Caco-2 (cell line): ENCODE measurements at regions of chrX and their contacts with region 1.

Region 1: DNA sequence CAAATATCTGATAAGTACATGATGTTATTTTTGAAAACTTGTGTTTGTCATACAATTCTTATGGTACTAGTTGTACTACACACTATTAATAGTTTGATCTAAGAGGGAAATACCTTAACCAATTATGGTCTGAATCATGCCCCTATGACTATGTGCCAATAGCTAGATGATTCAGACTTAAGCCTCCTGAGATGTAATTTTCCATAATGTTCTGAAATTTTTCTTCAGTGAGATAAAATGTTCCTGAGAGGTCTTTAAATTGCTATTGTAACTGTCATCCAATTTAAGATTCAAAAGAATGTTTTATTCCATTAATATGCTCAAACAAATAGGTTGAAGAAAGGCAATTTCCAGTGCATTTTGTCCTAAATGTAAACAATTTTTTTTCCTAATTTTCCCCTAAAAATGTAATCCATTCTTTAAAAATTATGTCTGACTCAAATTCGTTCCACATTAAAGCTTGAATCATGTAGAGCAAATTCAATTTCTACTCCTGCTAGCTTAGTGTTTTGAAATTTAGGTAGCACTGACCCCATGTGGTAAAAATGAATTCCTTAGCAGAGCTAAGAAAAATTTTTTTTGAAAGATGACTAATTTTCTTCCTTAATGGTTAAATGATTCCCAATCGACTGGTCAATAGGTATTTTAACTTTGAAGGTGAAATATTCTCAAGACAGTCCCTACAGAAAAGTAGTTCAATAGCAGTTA is 49.1 kb downstream of the APOOL start:
- DNase-seq: no peak
- H3K4me3 ChIP-seq: no peak overlapping the region
- H3K4me3 Mint-ChIP-seq: no peak overlapping the region
- H3K27ac Mint-ChIP-seq: no peak overlapping the region
- H3K4me1 ChIP-seq: no peaks in the 10 kb centered on the region
- H3K4me1 Mint-ChIP-seq: no peaks in the 10 kb centered on the region
- H3K27me3 ChIP-seq: no peaks in the 10 kb centered on the region
- H3K27me3 Mint-ChIP-seq: no peaks in the 10 kb centered on the region
- CTCF ChIP-seq: peak in 1 of 2 experiments; percentile 1

Region 2: DNA sequence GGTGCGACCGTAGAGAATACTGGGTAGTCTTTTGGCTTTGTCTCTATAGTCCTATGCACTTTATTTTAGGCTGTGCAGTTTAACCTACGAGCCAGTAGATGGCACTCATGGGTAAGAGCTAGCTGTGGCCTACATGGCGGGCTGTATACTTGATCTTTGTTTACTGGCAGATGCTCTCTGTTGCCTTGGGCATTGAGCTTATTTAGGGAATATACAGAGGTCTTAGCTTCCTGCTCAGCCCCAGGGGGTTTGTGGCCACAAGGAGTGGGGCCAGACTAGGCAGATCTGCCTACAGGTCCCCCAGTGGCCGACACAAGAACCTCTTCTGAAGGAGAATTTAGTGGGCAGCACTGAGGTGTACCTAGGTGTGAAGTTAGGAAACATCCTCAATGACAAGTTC is 323.0 kb before region 1 on chrX:
- CTCF ChIA-PET with region 1: interaction called, 9 read pairs
- POLR2A ChIA-PET with region 1: no interaction called
- intact Hi-C with region 1: loop called (anchors 1 kb)
- DNase-seq: peak; percentile 29 to 36
- H3K4me3 ChIP-seq: no peak overlapping the region
- H3K4me3 Mint-ChIP-seq: no peak overlapping the region
- H3K27ac Mint-ChIP-seq: no peak overlapping the region
- H3K4me1 ChIP-seq: peaks cover 5% of the 10 kb centered on the region
- H3K4me1 Mint-ChIP-seq: peaks cover 5% of the 10 kb centered on the region
- H3K27me3 ChIP-seq: no peaks in the 10 kb centered on the region
- H3K27me3 Mint-ChIP-seq: no peaks in the 10 kb centered on the region
- CTCF ChIP-seq: peak; percentile 47 to 66

Region 3: DNA sequence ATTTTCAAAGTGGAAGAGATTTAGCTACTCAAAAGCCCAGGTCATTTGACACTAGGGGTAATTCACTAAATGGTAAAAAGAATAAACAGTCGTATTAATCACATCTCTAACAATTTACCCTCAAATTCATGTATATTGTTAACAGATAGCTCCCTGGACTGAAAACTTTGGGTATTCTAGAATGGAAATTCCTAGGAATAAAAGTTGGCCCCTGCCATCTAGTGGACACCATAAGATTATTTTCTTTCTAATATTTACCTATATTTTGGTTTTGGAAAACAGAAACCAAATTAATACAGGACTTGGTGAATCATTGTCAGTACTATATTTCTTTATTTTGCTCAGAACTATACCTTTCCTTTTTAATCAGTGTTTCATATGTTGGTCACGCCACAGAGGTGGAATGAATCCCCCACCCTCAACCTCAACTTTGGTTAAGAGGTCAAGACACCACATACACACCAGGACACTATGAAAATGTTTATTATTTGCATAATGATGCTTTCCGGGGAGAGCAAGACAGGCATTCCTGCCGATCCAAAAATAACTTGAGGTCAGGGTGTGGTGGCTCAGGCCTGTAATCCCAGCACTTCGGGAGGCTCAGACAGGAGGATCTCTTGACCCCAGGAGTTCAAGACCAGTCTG is 145.3 kb before region 1 on chrX:
- CTCF ChIA-PET with region 1: interaction called, 7 read pairs
- POLR2A ChIA-PET with region 1: no interaction called
- intact Hi-C with region 1: loop called (anchors 5 kb)
- DNase-seq: peak in 1 of 2 experiments; percentile 2
- H3K4me3 ChIP-seq: no peak overlapping the region
- H3K4me3 Mint-ChIP-seq: no peak overlapping the region
- H3K27ac Mint-ChIP-seq: no peak overlapping the region
- H3K4me1 ChIP-seq: no peaks in the 10 kb centered on the region
- H3K4me1 Mint-ChIP-seq: no peaks in the 10 kb centered on the region
- H3K27me3 ChIP-seq: no peaks in the 10 kb centered on the region
- H3K27me3 Mint-ChIP-seq: no peaks in the 10 kb centered on the region
- CTCF ChIP-seq: no peak

Region 4: GRCh38 chrX:85003655-85004244 is 49.0 kb before region 1 on chrX and contains the start of gene APOOL:
- CTCF ChIA-PET with region 1: interaction called, 8 read pairs
- POLR2A ChIA-PET with region 1: no interaction called
- intact Hi-C with region 1: loop called (anchors 5 kb)
- DNase-seq: peak; percentile 88 to 90
- H3K4me3 ChIP-seq: peak within 1 kb of the TSS; percentile 63
- H3K4me3 Mint-ChIP-seq: peak within 1 kb of the TSS; percentile 84
- H3K27ac Mint-ChIP-seq: peak within 1 kb of the TSS; percentile 88
- H3K4me1 ChIP-seq: no peaks in the 10 kb centered on the region
- H3K4me1 Mint-ChIP-seq: no peaks in the 10 kb centered on the region
- H3K27me3 ChIP-seq: no peaks in the 10 kb centered on the region
- H3K27me3 Mint-ChIP-seq: no peaks in the 10 kb centered on the region
- CTCF ChIP-seq: no peak
- total RNA-seq, gene APOOL: 20.0 and 21.8 TPM in 2 replicates